Prostate gland (tissue), 2 donors: ENCODE measurements at regions of chr5 and their contacts with region 1.

Region 1: DNA sequence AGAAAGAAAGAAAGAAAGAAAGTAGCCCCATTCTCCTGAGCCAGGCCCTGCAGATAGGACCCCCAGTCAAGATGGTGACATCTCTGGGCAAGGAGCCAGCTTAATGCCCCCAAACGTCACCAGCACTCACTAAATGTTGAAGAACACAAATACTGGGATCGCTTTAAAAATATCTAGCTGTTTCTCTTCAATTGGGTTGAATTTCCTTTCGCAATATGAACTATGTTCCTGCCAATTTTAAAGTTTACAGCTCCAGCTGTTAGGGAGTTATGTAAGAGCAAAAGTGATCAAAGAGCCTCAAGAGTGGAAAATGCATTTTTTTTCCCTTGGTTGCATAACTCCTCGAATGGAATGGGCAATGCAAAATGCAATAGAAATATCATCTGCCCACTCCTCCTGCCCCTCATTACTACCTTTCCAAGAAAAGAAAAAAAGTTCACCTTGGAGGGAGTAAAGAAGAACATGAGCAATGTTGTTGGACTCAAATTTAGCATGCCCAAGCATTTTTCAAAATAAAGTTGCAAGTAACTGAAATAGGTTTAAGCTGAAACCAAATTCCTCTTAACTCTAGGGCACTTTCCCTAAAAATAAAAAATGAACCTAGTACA is 244.2 kb upstream of the PIK3R1 start:
- DNase-seq: no peak
- H3K4me3 ChIP-seq: no peak overlapping the region
- H3K27ac ChIP-seq: peak overlapping the region; percentile 22 to 38
- H3K4me1 ChIP-seq: peaks cover 2% of the 10 kb centered on the region
- H3K27me3 ChIP-seq: no peaks in the 10 kb centered on the region
- CTCF ChIP-seq: no peak
- POLR2A ChIP-seq: no peak

Region 2: DNA sequence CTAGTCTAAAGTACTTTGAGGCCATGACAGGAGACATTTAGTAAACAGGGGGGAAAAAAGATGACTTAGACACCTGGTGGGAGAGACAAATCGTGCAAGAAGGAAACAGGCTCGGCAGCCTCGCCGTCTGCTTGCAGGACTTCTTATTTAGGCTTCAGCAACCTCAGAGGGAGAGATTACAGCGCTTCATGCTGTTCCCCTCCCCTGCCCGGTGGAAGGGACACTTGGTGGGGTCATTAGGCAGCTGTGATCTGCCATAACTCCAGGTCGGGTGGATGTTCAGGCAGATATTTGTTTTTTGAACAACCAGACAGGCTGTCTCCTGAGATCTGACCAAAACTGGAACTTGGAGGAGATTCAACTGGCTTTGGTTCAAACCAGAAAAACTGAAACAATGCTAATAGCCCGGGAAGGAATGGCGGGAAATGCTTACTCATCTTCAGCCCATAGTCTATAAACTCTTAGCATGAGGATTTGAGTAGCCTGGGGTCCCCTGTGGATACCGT is 736.6 kb before region 1 on chr5:
- intact Hi-C with region 1: loop called (anchors 10 kb)
- DNase-seq: peak; percentile 42
- H3K4me3 ChIP-seq: no peak overlapping the region
- H3K27ac ChIP-seq: peak overlapping the region; percentile 24 to 53
- H3K4me1 ChIP-seq: no peaks in the 10 kb centered on the region
- H3K27me3 ChIP-seq: no peaks in the 10 kb centered on the region
- CTCF ChIP-seq: no peak
- POLR2A ChIP-seq: no peak

Region 3: GRCh38 chr5:67879620-67880510 is 91.5 kb before region 1 on chr5:
- intact Hi-C with region 1: no loop called
- DNase-seq: no peak
- H3K4me3 ChIP-seq: no peak overlapping the region
- H3K27ac ChIP-seq: peak overlapping the region in 1 of 2 donors; percentile 52
- H3K4me1 ChIP-seq: peaks cover 9% of the 10 kb centered on the region
- H3K27me3 ChIP-seq: no peaks in the 10 kb centered on the region
- CTCF ChIP-seq: no peak
- POLR2A ChIP-seq: no peak

Region 4: GRCh38 chr5:67949166-67949565 is 22.2 kb before region 1 on chr5:
- intact Hi-C with region 1: no loop called
- DNase-seq: no peak
- H3K4me3 ChIP-seq: no peak overlapping the region
- H3K27ac ChIP-seq: no peak overlapping the region
- H3K4me1 ChIP-seq: no peaks in the 10 kb centered on the region
- H3K27me3 ChIP-seq: no peaks in the 10 kb centered on the region
- CTCF ChIP-seq: no peak
- POLR2A ChIP-seq: no peak